Adrenal gland (tissue), 19 donors: ENCODE measurements at regions of chr18 and their contacts with region 1.

Region 1: GRCh38 chr18:32470713-32471633 is at the start of gene GAREM1:
- DNase-seq: peak; percentile 96 to 98 (median 97)
- H3K4me3 ChIP-seq: peak within 1 kb of the TSS; percentile 35 to 96 (median 58)
- H3K27ac ChIP-seq: peak within 1 kb of the TSS; percentile 46 to 96 (median 77)
- H3K4me1 ChIP-seq: peaks cover 12 to 29% of the 10 kb centered on the region in 2 donors
- H3K27me3 ChIP-seq: no peaks in the 10 kb centered on the region
- CTCF ChIP-seq: peak; percentile 27 to 92 (median 72)
- POLR2A ChIP-seq: peak; percentile 93 to 99
- total RNA-seq, gene GAREM1: 14.2 to 69.5 (median 24.2) TPM

Region 2: DNA sequence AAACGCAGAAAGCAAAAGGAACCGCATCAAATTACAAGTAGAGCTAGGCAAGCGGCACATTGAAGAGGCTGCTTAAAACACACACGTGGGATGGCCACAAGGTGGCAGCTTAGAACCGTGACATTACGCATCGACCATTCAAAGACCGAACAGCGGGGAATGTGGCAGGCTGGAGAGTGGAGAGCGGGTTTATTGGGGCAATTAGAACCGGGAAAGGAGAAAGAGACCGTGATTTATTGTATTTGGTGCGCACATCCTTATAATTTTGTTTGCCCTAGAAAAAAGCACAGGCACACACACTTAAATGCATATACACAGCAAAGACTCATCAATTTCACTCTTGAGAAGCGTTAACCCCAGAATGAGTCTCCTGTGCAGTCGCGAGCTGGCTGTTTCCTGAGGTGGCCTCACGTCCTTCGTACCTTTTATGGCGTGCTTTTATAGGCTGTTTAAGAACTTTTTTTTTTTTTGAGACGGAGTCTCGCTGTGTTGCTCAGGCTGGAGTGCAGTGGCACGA is 312.8 kb before region 1 on chr18:
- intact Hi-C with region 1: loop called (anchors 10 kb)
- DNase-seq: peak; percentile 79 to 92 (median 86)
- H3K4me3 ChIP-seq: no peak overlapping the region
- H3K27ac ChIP-seq: no peak overlapping the region
- H3K4me1 ChIP-seq: peaks cover 0 to 7% of the 10 kb centered on the region in 2 donors
- H3K27me3 ChIP-seq: no peaks in the 10 kb centered on the region
- CTCF ChIP-seq: peak; percentile 71 to 96 (median 90)
- POLR2A ChIP-seq: no peak

Region 3: GRCh38 chr18:32167975-32168730 is 302.8 kb before region 1 on chr18:
- intact Hi-C with region 1: loop called in 1 of 2 experiments (anchors 10 kb)
- DNase-seq: no peak
- H3K4me3 ChIP-seq: no peak overlapping the region
- H3K27ac ChIP-seq: no peak overlapping the region
- H3K4me1 ChIP-seq: no peaks in the 10 kb centered on the region
- H3K27me3 ChIP-seq: no peaks in the 10 kb centered on the region
- CTCF ChIP-seq: no peak
- POLR2A ChIP-seq: no peak

Region 4: GRCh38 chr18:32271672-32272208 is 199.2 kb before region 1 on chr18:
- intact Hi-C with region 1: loop called (anchors 5 kb)
- DNase-seq: peak in 4 of 7 donors; percentile 15 to 48 (median 36)
- H3K4me3 ChIP-seq: no peak overlapping the region
- H3K27ac ChIP-seq: no peak overlapping the region
- H3K4me1 ChIP-seq: no peaks in the 10 kb centered on the region
- H3K27me3 ChIP-seq: no peaks in the 10 kb centered on the region
- CTCF ChIP-seq: peak; percentile 53 to 80 (median 70)
- POLR2A ChIP-seq: no peak

Region 5: GRCh38 chr18:32383050-32383819 is 87.7 kb before region 1 on chr18:
- intact Hi-C with region 1: loop called in 1 of 2 experiments (anchors 10 kb)
- DNase-seq: peak; percentile 36 to 70 (median 65)
- H3K4me3 ChIP-seq: no peak overlapping the region
- H3K27ac ChIP-seq: peak overlapping the region in 4 of 5 donors; percentile 61 to 77 (median 71)
- H3K4me1 ChIP-seq: peaks cover 28 to 39% of the 10 kb centered on the region in 2 donors
- H3K27me3 ChIP-seq: no peaks in the 10 kb centered on the region
- CTCF ChIP-seq: no peak
- POLR2A ChIP-seq: peak in 1 of 2 donors; percentile 33